ENCODE measurements at regions of chr1 and their contacts with region 1.

Region 1: DNA sequence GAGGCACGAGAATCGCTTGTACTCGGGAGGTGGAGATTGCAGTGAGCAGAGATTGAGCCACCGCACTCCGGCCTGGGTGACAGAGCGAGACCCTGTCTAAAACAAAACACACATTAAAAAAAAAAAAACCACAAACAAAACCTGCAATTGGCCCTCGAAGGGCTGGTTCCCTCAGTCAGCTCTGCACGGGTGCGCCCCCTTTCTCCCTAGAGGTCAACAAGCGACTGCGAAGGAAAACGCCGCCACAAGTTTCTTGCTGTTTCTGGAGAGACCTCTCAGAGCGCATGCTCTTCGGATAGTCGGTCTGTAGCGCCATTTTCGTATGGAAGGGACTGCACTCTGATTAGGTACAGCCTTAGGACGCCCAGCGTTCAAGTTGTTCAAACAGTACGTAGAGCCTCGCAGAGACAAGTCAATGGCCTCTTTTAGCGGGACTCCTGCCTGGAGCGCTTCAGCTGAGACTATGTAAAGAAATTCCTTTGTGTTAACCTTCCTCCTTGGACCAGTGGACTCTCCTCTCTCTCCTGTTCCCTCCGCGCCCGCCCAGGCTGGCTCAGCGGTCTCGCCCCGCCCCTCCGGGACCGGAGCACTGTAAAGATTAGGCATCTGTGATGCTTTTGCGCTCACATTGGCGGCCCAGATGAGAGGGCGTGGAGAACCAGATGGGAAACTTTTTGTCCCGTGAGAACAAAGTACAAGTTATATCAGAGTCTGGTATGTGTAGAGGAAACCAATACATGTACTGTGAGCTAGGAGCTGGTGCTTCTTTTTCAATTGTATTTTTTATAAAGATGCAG is 1.0 kb upstream of the CDC14A start:
- DNase-seq: peak; percentile 90
- ATAC-seq: peak; percentile 71
- H3K4me3 ChIP-seq: peak overlapping the region; percentile 92
- H3K27ac ChIP-seq: peak overlapping the region; percentile 71
- H3K4me1 ChIP-seq: peaks cover 29% of the 10 kb centered on the region
- H3K27me3 ChIP-seq: no peaks in the 10 kb centered on the region
- CTCF ChIP-seq: peak; percentile 55

Region 2: GRCh38 chr1:100152271-100152670 is 199.0 kb before region 1 on chr1:
- CTCF ChIA-PET with region 1: no interaction called
- POLR2A ChIA-PET with region 1: interaction called, 11 read pairs
- intact Hi-C with region 1: no loop called
- DNase-seq: no peak
- ATAC-seq: no peak
- H3K4me3 ChIP-seq: no peak overlapping the region
- H3K27ac ChIP-seq: no peak overlapping the region
- H3K4me1 ChIP-seq: no peaks in the 10 kb centered on the region
- H3K27me3 ChIP-seq: no peaks in the 10 kb centered on the region
- CTCF ChIP-seq: no peak

Region 3: GRCh38 chr1:100265931-100266740 is 85.2 kb before region 1 on chr1 and contains the start of gene RTCA:
- CTCF ChIA-PET with region 1: no interaction called
- POLR2A ChIA-PET with region 1: interaction called, 5 read pairs
- intact Hi-C with region 1: loop called (anchors 5 kb)
- DNase-seq: peak; percentile 96
- ATAC-seq: peak; percentile 96
- H3K4me3 ChIP-seq: peak within 1 kb of the TSS; percentile 97
- H3K27ac ChIP-seq: peak within 1 kb of the TSS; percentile 23
- H3K4me1 ChIP-seq: peaks cover 10% of the 10 kb centered on the region
- H3K27me3 ChIP-seq: no peaks in the 10 kb centered on the region
- CTCF ChIP-seq: no peak
- total RNA-seq, gene RTCA: 34.4 and 41.7 TPM in 2 replicates

Region 4: GRCh38 chr1:100322436-100323211 is 28.7 kb before region 1 on chr1:
- CTCF ChIA-PET with region 1: no interaction called
- POLR2A ChIA-PET with region 1: no interaction called
- intact Hi-C with region 1: loop called (anchors 2 kb)
- DNase-seq: peak; percentile 63
- ATAC-seq: peak; percentile 53
- H3K4me3 ChIP-seq: no peak overlapping the region
- H3K27ac ChIP-seq: 0 out of 2 replicates have a peak overlapping the region, but pooled peaks have one; percentile 4
- H3K4me1 ChIP-seq: peaks cover 14% of the 10 kb centered on the region
- H3K27me3 ChIP-seq: no peaks in the 10 kb centered on the region
- CTCF ChIP-seq: no peak

Measured in PC-3 (cell line).